ENCODE measurements at regions of chr22 and their contacts with region 1.

Region 1: DNA sequence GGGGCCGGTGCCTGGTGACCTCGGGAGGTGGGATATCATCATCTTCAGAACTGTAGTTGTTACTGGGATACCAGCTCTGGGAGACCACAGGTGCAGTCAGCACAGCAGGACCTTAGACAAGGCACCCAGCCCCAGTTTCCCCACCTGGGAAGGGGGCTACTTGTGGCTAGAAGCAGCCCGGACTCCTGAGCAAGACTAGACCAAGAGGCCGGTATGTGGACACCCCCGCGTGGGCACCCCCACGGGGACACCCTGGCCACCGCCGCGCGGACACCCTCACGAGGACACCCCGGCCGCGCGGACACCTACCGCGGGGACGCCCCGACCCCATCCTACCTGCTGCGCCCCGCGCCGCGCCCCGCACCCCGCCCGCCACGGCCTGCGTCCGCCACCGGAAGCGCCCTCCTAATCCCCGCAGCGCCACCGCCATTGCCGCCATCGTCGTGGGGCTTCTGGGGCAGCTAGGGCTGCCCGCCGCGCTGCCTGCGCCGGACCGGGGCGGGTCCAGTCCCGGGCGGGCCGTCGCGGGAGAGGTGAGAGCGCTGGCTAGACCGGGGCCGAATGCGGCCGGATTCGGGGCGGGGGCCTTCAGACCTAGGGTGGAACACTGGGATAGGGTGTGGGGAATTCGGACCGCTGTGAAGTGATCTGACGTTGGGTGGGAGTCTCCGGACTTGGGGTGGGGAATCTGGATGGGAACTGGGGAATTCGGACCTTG is at the starts of genes COMT and TXNRD2:
- DNase-seq: peak; percentile 79 to 88
- H3K4me3 ChIP-seq: peak within 1 kb of the TSS; percentile 62
- H3K4me3 Mint-ChIP-seq: peak within 1 kb of the TSS; percentile 96
- H3K27ac Mint-ChIP-seq: peak within 1 kb of the TSS; percentile 96
- H3K4me1 ChIP-seq: peaks cover 13% of the 10 kb centered on the region
- H3K4me1 Mint-ChIP-seq: peaks cover 10% of the 10 kb centered on the region
- H3K27me3 ChIP-seq: no peaks in the 10 kb centered on the region
- H3K27me3 Mint-ChIP-seq: no peaks in the 10 kb centered on the region
- CTCF ChIP-seq: no peak
- total RNA-seq, gene COMT: 96.0 and 103 TPM in 2 replicates
- total RNA-seq, gene TXNRD2: 44.8 and 47.0 TPM in 2 replicates

Region 2: DNA sequence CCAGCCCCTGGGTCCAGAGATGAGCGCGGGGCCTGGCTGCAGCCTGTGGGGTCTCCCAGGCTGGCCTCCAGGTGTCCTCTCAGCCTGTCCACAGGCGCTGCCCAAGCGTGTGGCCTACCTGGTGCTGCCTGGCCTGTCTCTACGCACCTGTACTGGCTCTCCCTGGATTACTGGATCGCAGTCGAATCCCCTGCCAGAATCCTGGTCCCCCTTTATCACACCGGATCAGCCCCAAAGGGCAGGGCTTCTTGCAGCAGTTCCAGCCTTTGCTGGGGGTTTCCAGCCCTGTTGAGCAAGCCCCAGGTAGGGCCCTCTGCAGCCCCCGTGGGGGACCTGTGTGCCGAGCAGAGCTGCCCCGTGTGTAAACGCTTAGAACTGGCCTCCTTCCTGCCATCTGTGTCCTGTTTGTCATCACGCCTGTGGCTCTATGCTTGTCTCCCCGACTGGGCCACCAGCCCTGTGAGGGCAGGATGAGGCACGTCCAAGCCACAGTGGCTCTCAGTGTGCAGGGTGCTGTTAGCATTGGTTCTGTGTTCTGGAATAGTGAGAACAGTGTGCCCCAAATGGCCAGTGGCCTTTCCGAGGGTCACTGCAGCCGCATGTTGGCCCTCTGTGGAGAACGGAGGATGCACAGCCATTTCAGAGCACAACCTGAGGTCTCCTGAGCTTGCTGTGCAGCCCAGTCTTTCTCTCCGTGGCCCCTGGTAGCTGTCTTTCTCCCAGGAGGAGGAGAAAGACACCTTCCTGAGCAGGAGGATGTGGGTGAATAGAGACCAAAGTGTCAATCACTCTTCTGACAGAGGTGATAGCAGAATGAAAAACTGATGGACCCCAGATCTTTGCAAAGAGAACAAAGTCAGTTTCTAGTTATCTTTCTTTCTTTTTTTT is 14.0 kb after region 1 on chr22:
- CTCF ChIA-PET with region 1: interaction called, 17 read pairs
- POLR2A ChIA-PET with region 1: no interaction called
- intact Hi-C with region 1: no loop called
- DNase-seq: no peak
- H3K4me3 ChIP-seq: no peak overlapping the region
- H3K4me3 Mint-ChIP-seq: no peak overlapping the region
- H3K27ac Mint-ChIP-seq: no peak overlapping the region
- H3K4me1 ChIP-seq: peaks cover 15% of the 10 kb centered on the region
- H3K4me1 Mint-ChIP-seq: peaks cover 2% of the 10 kb centered on the region
- H3K27me3 ChIP-seq: no peaks in the 10 kb centered on the region
- H3K27me3 Mint-ChIP-seq: no peaks in the 10 kb centered on the region
- CTCF ChIP-seq: no peak